Right cardiac atrium (tissue), 5 donors: ENCODE measurements at regions of chr2 and their contacts with region 1.

Region 1: GRCh38 chr2:234951664-234952269 is at the start of gene SH3BP4:
- DNase-seq: peak; percentile 87 to 95 (median 94)
- ATAC-seq: peak; percentile 94
- H3K4me3 ChIP-seq: peak within 1 kb of the TSS; percentile 94
- H3K27ac ChIP-seq: peak within 1 kb of the TSS; percentile 1
- H3K4me1 ChIP-seq: peaks cover 5% of the 10 kb centered on the region
- H3K27me3 ChIP-seq: no peaks in the 10 kb centered on the region
- total RNA-seq, gene SH3BP4: 18.4 to 32.0 (median 21.6) TPM

Region 2: GRCh38 chr2:233130481-233131020 is 1821.2 kb before region 1 on chr2:
- intact Hi-C with region 1: no loop called
- DNase-seq: no peak
- ATAC-seq: no peak
- H3K4me3 ChIP-seq: no peak overlapping the region
- H3K27ac ChIP-seq: no peak overlapping the region
- H3K4me1 ChIP-seq: peaks cover 5% of the 10 kb centered on the region
- H3K27me3 ChIP-seq: no peaks in the 10 kb centered on the region

Region 3: DNA sequence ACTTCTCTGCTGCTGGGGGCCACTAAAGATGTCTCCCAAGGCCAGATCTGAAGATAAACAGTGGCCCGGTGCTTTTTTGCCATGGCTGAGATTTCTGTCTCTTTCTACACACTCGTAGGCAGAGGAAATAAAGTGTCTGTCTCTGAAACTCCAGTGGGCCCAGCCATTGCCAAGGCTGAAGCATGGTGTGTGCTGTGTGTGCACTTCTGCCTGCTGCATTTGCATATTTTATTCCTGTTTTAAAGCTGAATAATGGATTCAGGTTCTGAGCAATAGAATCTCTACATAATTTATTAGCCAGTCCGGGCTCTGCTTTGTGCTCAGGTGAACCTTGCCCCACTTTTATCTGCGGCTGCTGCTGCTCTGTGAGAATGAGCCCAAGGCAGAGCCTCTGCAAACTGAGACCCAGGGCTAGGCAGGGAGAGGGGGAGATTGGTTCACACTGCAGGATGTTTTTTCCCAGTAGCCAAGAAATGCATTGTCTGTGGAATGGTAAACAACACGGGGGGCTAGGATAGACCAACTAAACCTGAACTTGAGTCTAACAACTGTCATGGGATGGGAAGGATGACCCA is 64.6 kb before region 1 on chr2:
- intact Hi-C with region 1: loop called in 1 of 4 experiments (anchors 2 kb)
- DNase-seq: no peak
- ATAC-seq: no peak
- H3K4me3 ChIP-seq: no peak overlapping the region
- H3K27ac ChIP-seq: no peak overlapping the region
- H3K4me1 ChIP-seq: no peaks in the 10 kb centered on the region
- H3K27me3 ChIP-seq: no peaks in the 10 kb centered on the region

Region 4: GRCh38 chr2:234989183-234989701 is 37.5 kb after region 1 on chr2:
- intact Hi-C with region 1: no loop called
- DNase-seq: peak; percentile 87 to 95 (median 92)
- ATAC-seq: peak; percentile 69 to 73
- H3K4me3 ChIP-seq: no peak overlapping the region
- H3K27ac ChIP-seq: peak overlapping the region; percentile 1
- H3K4me1 ChIP-seq: peaks cover 12% of the 10 kb centered on the region
- H3K27me3 ChIP-seq: no peaks in the 10 kb centered on the region

Region 5: DNA sequence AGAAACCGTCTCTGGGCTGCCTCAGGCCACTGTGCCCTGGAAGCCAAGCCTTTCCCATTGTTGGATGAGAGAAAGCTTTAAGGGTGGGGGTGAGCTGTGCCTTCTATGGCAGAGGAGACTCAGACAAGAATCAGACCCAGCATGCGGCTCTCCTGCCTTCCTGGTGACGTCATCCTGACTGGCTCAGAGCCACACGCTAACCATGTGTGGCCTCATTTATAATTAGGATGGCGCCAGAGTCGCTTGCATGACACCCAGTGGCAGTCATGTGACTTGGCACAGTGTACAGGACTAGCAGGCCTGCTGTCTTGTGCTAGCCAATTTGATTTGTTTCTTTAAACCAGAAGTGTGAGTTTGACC is 99.2 kb after region 1 on chr2:
- intact Hi-C with region 1: loop called in 1 of 4 experiments (anchors 10 kb)
- DNase-seq: peak; percentile 95 to 98 (median 96)
- ATAC-seq: peak; percentile 90 to 93
- H3K4me3 ChIP-seq: no peak overlapping the region
- H3K27ac ChIP-seq: peak overlapping the region; percentile 79
- H3K4me1 ChIP-seq: peaks cover 20% of the 10 kb centered on the region
- H3K27me3 ChIP-seq: no peaks in the 10 kb centered on the region